CD8-positive, alpha-beta T cell (primary cell): ENCODE measurements at regions of chr14 and their contacts with region 1.

Region 1: DNA sequence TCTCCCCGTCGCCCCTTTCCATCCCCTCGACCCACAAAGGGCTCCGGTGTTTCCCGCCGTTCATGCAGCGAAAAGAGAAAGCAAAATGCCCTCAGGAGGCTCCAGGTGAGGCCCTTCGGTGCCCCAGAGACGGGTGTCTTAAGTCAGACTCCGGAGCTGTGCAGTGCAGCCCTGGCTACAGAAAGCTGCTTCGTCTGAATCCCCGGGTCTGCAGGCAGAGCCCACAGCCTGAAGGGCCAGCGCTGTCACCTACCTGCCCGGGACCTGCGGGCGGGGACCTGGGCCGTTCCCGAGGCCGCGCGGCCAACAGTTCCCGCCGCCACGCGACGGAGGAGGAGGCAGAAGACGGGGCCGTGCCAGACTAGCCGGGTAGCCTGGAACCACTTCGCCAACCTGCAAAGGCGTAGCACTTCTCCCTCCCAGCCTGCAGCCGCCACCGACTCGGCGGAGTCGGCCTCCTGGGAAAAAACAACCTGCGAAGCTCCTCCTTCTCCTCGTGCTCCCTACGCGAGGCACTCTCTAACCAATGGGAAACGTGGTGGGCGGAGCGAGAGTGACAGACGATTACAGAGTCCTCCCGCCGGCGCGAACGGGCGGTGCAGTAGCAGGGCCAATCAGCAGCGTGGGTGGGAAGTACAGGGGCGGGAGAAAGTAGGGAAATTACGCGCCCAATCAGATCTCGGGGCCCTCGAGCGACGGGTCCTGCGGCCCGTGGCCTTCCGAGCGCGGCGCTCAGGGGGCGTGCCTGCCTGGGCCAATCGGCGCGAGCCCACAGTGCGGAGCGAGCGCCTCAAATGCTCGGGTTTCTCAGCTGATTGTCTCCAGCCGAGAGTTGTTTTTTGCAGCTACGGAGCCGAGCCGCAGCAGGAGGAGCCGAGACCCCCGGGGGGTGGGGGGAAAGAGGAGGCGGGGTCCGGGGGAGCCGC is at the starts of genes GPR137C and TXNDC16:
- DNase-seq: peak; percentile 98 to 100 (median 99)
- ATAC-seq: peak; percentile 85
- H3K4me3 ChIP-seq: peak within 1 kb of the TSS; percentile 77 to 86
- H3K4me3 Mint-ChIP-seq: peak within 1 kb of the TSS; percentile 95
- H3K27ac ChIP-seq: peak within 1 kb of the TSS; percentile 75 to 91
- H3K27ac Mint-ChIP-seq: peak within 1 kb of the TSS; percentile 90
- H3K4me1 ChIP-seq: peaks cover 21% of the 10 kb centered on the region
- H3K4me1 Mint-ChIP-seq: peaks cover 23% of the 10 kb centered on the region
- H3K27me3 ChIP-seq: no peaks in the 10 kb centered on the region
- H3K27me3 Mint-ChIP-seq: peaks cover 6% of the 10 kb centered on the region
- CTCF ChIP-seq: no peak
- total RNA-seq, gene GPR137C: 0.08 to 0.22 TPM
- total RNA-seq, gene TXNDC16: 10.8 to 13.4 TPM

Region 2: GRCh38 chr14:51651388-51652167 is 900.7 kb before region 1 on chr14 and contains the start of gene FRMD6:
- CTCF ChIA-PET with region 1: no interaction called
- POLR2A ChIA-PET with region 1: no interaction called
- intact Hi-C with region 1: loop called (anchors 5 kb)
- DNase-seq: peak; percentile 58 to 90 (median 76)
- ATAC-seq: peak; percentile 82
- H3K4me3 ChIP-seq: peak within 1 kb of the TSS; percentile 87 to 94
- H3K4me3 Mint-ChIP-seq: peak within 1 kb of the TSS; percentile 85
- H3K27ac ChIP-seq: peak within 1 kb of the TSS; percentile 55 to 73
- H3K27ac Mint-ChIP-seq: peak within 1 kb of the TSS; percentile 73
- H3K4me1 ChIP-seq: peaks cover 19% of the 10 kb centered on the region
- H3K4me1 Mint-ChIP-seq: peaks cover 17% of the 10 kb centered on the region
- H3K27me3 ChIP-seq: peaks cover 6 to 16% of the 10 kb centered on the region in 2 experiments
- H3K27me3 Mint-ChIP-seq: peaks cover 21% of the 10 kb centered on the region
- CTCF ChIP-seq: peak; percentile 70
- total RNA-seq, gene FRMD6: 2.4 to 3.5 TPM

Region 3: DNA sequence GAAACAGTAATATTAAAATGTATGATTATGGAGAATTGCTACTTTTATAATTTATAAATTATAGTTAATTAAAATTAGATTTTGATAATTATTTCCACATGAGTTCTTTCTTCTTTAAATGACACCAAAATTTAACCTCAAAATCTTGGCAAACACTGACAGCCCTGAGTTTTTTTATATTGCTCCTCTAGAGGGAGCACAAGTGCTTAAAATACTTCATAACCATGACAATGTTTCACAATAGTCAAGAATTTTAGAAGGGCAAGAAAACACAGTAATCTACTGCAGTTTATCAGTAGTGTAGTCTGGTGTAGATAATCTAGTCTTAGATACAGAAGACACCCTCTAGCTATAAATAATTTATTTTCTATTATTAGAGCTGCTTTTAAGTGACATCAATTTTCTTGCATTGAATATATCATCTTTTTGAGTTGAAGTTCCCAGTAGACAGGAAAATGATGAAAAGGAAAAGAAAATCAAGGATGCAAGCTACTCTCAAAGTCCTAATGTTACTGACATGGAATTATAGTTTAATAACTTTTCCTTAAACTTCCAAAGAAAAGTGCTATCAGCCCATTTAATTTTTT is 252.5 kb before region 1 on chr14:
- CTCF ChIA-PET with region 1: interaction called, 3 read pairs
- POLR2A ChIA-PET with region 1: interaction called, 3 read pairs
- intact Hi-C with region 1: loop called in 1 of 2 experiments (anchors 5 kb)
- DNase-seq: peak in 2 of 9 experiments; percentile 60 to 74
- ATAC-seq: peak; percentile 49
- H3K4me3 ChIP-seq: no peak overlapping the region
- H3K4me3 Mint-ChIP-seq: no peak overlapping the region
- H3K27ac ChIP-seq: no peak overlapping the region
- H3K27ac Mint-ChIP-seq: no peak overlapping the region
- H3K4me1 ChIP-seq: no peaks in the 10 kb centered on the region
- H3K4me1 Mint-ChIP-seq: peaks cover 30% of the 10 kb centered on the region
- H3K27me3 ChIP-seq: no peaks in the 10 kb centered on the region
- H3K27me3 Mint-ChIP-seq: no peaks in the 10 kb centered on the region
- CTCF ChIP-seq: peak; percentile 96

Region 4: DNA sequence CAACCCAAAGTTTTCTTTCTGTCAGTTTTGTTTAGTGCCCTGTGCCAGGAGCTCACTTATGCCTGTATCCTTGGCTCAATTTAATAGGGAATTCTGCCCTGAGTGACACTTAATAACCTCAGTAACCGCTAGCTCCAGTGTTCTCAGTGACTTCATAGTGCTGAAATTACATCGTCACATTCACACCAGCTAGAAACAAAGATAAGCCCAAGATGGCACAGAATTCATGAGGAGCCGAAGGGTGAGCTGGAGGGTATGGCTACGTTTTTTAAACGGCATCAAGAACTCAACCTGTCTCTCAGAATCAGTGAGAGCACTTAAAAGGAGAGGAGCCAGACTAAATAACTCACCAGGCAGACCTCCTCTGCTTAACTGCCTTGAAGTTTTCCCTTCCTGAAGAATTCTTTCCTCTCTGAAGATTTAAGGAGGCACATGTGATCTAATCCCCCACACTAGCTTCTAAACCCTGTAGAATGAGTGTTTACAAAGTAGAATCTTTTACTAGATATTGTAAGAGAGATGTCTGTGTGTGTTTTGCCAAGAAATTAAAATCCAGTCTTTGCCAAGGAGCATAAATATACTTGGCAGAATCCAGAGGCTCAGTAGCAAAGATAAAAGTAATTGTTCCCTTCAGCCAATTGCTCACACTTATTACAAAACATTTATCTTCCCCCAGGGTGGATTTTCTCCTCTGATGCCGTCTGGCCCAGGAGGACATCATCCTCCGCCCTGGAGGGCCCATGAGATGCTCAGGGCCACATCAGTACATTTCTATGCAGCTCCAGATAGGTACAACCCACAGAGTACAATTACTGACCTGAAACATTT is 200.9 kb before region 1 on chr14:
- CTCF ChIA-PET with region 1: no interaction called
- POLR2A ChIA-PET with region 1: no interaction called
- intact Hi-C with region 1: loop called in 1 of 2 experiments (anchors 5 kb)
- DNase-seq: peak in 2 of 9 experiments; percentile 15 to 42
- ATAC-seq: peak; percentile 39
- H3K4me3 ChIP-seq: peak overlapping the region; percentile 17 to 29
- H3K4me3 Mint-ChIP-seq: peak overlapping the region; percentile 76
- H3K27ac ChIP-seq: peak overlapping the region; percentile 36 to 65
- H3K27ac Mint-ChIP-seq: peak overlapping the region; percentile 93
- H3K4me1 ChIP-seq: peaks cover 53% of the 10 kb centered on the region
- H3K4me1 Mint-ChIP-seq: peaks cover 65% of the 10 kb centered on the region
- H3K27me3 ChIP-seq: no peaks in the 10 kb centered on the region
- H3K27me3 Mint-ChIP-seq: no peaks in the 10 kb centered on the region
- CTCF ChIP-seq: no peak

Region 5: DNA sequence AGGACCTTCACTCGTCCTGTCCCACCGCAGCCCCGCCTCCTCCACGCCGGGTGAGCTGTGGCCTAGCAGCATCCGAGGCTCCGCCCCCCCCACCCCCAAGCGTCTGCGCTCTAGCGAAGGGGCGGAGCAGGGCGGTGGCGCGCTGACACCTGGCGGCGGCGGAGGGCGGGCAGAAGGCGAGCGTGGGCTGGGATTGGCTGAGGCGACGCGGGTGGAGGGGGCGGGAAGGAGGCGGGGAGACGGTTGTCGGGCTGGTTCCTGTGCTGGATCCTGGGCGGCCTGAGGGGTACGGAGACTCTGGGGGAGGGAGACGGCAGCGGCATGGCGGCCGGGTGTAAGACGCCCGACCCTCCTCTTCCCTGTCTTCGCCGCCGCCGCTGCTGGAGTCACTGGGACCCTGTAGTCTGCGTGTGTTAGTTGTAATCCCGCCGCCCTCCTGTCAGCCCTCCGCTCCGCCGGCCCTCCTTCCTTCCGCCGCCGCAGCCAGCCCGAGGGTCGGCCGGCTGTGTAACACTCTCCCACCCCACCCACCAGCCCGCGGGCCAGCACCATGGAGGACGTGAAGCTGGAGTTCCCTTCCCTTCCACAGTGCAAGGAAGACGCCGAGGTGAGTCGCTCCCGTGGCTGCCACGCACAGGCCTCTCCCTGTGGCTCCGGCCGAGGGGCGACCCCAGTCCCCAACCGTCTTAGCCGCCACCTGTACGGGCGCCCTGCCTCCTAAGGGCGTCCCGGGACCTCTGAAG is 177.8 kb after region 1 on chr14 and contains the start of gene STYX:
- CTCF ChIA-PET with region 1: no interaction called
- POLR2A ChIA-PET with region 1: interaction called, 3 read pairs
- intact Hi-C with region 1: loop called (anchors 1 to 5 kb)
- DNase-seq: peak; percentile 97 to 99 (median 98)
- ATAC-seq: peak; percentile 96
- H3K4me3 ChIP-seq: peak within 1 kb of the TSS; percentile 87 to 98
- H3K4me3 Mint-ChIP-seq: peak within 1 kb of the TSS; percentile 89
- H3K27ac ChIP-seq: peak within 1 kb of the TSS; percentile 86
- H3K27ac Mint-ChIP-seq: peak within 1 kb of the TSS; percentile 93
- H3K4me1 ChIP-seq: peaks cover 17% of the 10 kb centered on the region
- H3K4me1 Mint-ChIP-seq: peaks cover 35% of the 10 kb centered on the region
- H3K27me3 ChIP-seq: no peaks in the 10 kb centered on the region
- H3K27me3 Mint-ChIP-seq: no peaks in the 10 kb centered on the region
- CTCF ChIP-seq: no peak
- total RNA-seq, gene STYX: 15.9 to 16.6 TPM

Region 6: DNA sequence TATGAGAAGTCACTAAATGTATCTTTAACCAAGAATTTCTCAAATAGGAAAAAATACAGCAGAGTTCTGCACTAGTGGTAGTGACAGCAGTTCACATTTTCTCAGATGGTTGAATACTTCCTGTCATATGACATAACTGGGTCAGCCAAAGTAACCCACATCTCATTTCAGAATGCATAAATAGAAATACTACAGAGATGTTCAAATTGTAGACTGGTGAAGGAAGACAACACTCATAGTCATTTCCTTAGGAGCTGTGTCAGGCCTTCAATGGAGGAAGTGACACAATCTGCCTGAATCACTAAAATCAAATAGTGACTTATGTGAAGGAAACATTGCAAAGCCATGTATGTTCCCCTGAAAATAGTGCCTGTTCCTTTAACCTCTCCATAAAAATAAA is 366.2 kb after region 1 on chr14:
- CTCF ChIA-PET with region 1: no interaction called
- POLR2A ChIA-PET with region 1: no interaction called
- intact Hi-C with region 1: loop called in 1 of 2 experiments (anchors 10 kb)
- DNase-seq: peak in 5 of 9 experiments; percentile 8 to 85 (median 14)
- ATAC-seq: peak; percentile 95
- H3K4me3 ChIP-seq: no peak overlapping the region
- H3K4me3 Mint-ChIP-seq: no peak overlapping the region
- H3K27ac ChIP-seq: peak overlapping the region; percentile 28 to 84
- H3K27ac Mint-ChIP-seq: peak overlapping the region; percentile 85
- H3K4me1 ChIP-seq: peaks cover 25% of the 10 kb centered on the region
- H3K4me1 Mint-ChIP-seq: peaks cover 33% of the 10 kb centered on the region
- H3K27me3 ChIP-seq: no peaks in the 10 kb centered on the region
- H3K27me3 Mint-ChIP-seq: no peaks in the 10 kb centered on the region
- CTCF ChIP-seq: no peak

Region 7: DNA sequence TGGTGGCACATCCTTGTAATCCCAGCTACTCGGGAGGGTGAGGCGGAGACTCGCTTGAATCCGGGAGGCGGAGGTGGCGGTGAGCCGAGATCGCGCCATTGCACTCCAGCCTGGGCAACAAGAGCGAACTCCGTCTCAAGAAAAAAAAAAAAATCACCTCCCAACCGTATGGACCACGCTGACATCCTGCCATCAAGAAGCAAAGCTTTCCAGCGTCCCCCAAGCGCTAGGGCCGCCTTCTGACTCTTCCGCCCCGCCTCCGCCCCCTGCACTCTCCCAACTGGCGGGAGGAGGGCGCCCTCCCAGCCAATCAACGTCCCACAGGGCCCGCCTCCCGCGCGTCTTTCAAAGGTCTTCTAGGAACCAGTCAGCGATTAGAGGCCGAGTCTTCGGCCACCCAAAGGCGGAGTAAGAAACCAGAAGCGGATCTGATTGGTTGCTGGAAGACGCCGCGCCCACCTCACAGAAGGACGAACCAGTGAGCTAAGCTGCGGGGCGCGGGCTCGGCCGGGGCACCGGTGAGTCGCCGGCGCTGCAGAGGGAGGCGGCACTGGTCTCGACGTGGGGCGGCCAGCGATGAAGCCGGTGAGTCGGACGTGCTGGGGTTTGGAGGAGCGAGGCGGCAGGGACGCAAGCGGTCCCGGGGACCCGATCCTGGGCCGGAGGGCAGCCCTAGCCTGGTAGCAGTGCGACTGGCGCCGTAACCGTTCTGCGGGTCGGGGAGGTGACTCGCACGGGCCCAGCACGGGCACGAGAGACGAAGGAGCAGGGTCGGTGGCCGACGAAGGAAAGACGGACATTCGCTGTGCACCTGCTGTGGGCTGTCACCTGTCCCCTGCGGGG is 1844.4 kb after region 1 on chr14 and contains the start of gene CDKN3:
- CTCF ChIA-PET with region 1: no interaction called
- POLR2A ChIA-PET with region 1: no interaction called
- intact Hi-C with region 1: loop called in 1 of 2 experiments (anchors 2 kb)
- DNase-seq: peak; percentile 94 to 98 (median 96)
- ATAC-seq: peak; percentile 95
- H3K4me3 ChIP-seq: peak within 1 kb of the TSS; percentile 80 to 96
- H3K4me3 Mint-ChIP-seq: peak within 1 kb of the TSS; percentile 86
- H3K27ac ChIP-seq: peak within 1 kb of the TSS; percentile 23 to 46
- H3K27ac Mint-ChIP-seq: peak within 1 kb of the TSS; percentile 47
- H3K4me1 ChIP-seq: peaks cover 4% of the 10 kb centered on the region
- H3K4me1 Mint-ChIP-seq: peaks cover 9% of the 10 kb centered on the region
- H3K27me3 ChIP-seq: no peaks in the 10 kb centered on the region
- H3K27me3 Mint-ChIP-seq: no peaks in the 10 kb centered on the region
- CTCF ChIP-seq: no peak
- total RNA-seq, gene CDKN3: 0.56 to 0.68 TPM